Activated T-helper 1 cell treated with anti-CD3 and anti-CD28 coated beads, Interleukin-12 subunit alpha, Interleukin-12 subunit beta, Interleukin-2, Interleukin-4 antibody, amounts not matched to agents 30 ng/mL and 10 ng/mL and 1 ng/mL, durations not matched to agents 14 hours and 24 hours and 36 hours (primary cell): ENCODE measurements at regions of chr19 and their contacts with region 1.

Region 1: GRCh38 chr19:20999731-21000352 is 20.6 kb upstream of the ZNF430 start:
- DNase-seq: peak; percentile 80
- H3K4me3 Mint-ChIP-seq: peak overlapping the region; percentile 89
- H3K27ac Mint-ChIP-seq: peak overlapping the region; percentile 76
- H3K4me1 Mint-ChIP-seq: peaks cover 8% of the 10 kb centered on the region
- H3K27me3 Mint-ChIP-seq: no peaks in the 10 kb centered on the region

Region 2: GRCh38 chr19:20565321-20566018 is 434.4 kb before region 1 on chr19 and contains the start of gene ZNF737:
- intact Hi-C with region 1: loop called (anchors 1 kb)
- DNase-seq: peak; percentile 81
- H3K4me3 Mint-ChIP-seq: peak within 1 kb of the TSS; percentile 97
- H3K27ac Mint-ChIP-seq: peak within 1 kb of the TSS; percentile 94
- H3K4me1 Mint-ChIP-seq: peaks cover 13% of the 10 kb centered on the region
- H3K27me3 Mint-ChIP-seq: no peaks in the 10 kb centered on the region
- total RNA-seq, gene ZNF737: 4.6 and 5.5 TPM in 2 replicates

Region 3: GRCh38 chr19:20923077-20923871 is 76.6 kb before region 1 on chr19 and contains the start of gene ZNF85:
- intact Hi-C with region 1: loop called (anchors 1 kb)
- DNase-seq: peak; percentile 85
- H3K4me3 Mint-ChIP-seq: peak within 1 kb of the TSS; percentile 94
- H3K27ac Mint-ChIP-seq: peak within 1 kb of the TSS; percentile 92
- H3K4me1 Mint-ChIP-seq: no peaks in the 10 kb centered on the region
- H3K27me3 Mint-ChIP-seq: no peaks in the 10 kb centered on the region
- total RNA-seq, gene ZNF85: 10.0 and 11.1 TPM in 2 replicates

Region 4: GRCh38 chr19:21020298-21021227 is 20.7 kb after region 1 on chr19 and contains the start of gene ZNF430:
- intact Hi-C with region 1: loop called (anchors 1 kb)
- DNase-seq: peak; percentile 93
- H3K4me3 Mint-ChIP-seq: peak within 1 kb of the TSS; percentile 99
- H3K27ac Mint-ChIP-seq: peak within 1 kb of the TSS; percentile 98
- H3K4me1 Mint-ChIP-seq: peaks cover 26% of the 10 kb centered on the region
- H3K27me3 Mint-ChIP-seq: peaks cover 2% of the 10 kb centered on the region
- total RNA-seq, gene ZNF430: 20.3 and 21.5 TPM in 2 replicates

Region 5: DNA sequence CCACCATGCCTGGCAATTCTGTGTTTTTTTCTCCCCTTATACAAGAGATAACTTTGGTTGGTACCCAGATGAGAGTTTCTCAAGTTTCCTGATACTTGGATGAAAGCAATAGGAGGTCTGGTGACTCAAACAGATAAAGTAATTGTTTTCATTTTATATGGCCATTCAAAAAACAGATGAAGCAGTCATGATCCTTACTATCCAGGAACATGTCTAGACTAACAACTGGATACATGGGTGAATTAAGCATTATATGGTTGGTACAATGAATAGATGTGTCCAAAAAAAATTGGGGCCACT is 29.1 kb after region 1 on chr19:
- intact Hi-C with region 1: loop called (anchors 2 kb)
- DNase-seq: no peak
- H3K4me3 Mint-ChIP-seq: peak overlapping the region; percentile 11
- H3K27ac Mint-ChIP-seq: no peak overlapping the region
- H3K4me1 Mint-ChIP-seq: peaks cover 35% of the 10 kb centered on the region
- H3K27me3 Mint-ChIP-seq: no peaks in the 10 kb centered on the region

Region 6: GRCh38 chr19:21082011-21082975 is 82.5 kb after region 1 on chr19 and contains the start of gene ZNF714:
- intact Hi-C with region 1: no loop called
- DNase-seq: peak; percentile 86
- H3K4me3 Mint-ChIP-seq: peak within 1 kb of the TSS; percentile 99
- H3K27ac Mint-ChIP-seq: peak within 1 kb of the TSS; percentile 98
- H3K4me1 Mint-ChIP-seq: peaks cover 31% of the 10 kb centered on the region
- H3K27me3 Mint-ChIP-seq: no peaks in the 10 kb centered on the region
- total RNA-seq, gene ZNF714: 18.5 and 19.5 TPM in 2 replicates

Region 7: GRCh38 chr19:21141787-21142464 is 142.1 kb after region 1 on chr19 and contains the start of gene ZNF431:
- intact Hi-C with region 1: loop called (anchors 1 kb)
- DNase-seq: peak; percentile 85
- H3K4me3 Mint-ChIP-seq: peak within 1 kb of the TSS; percentile 96
- H3K27ac Mint-ChIP-seq: peak within 1 kb of the TSS; percentile 91
- H3K4me1 Mint-ChIP-seq: peaks cover 25% of the 10 kb centered on the region
- H3K27me3 Mint-ChIP-seq: no peaks in the 10 kb centered on the region
- total RNA-seq, gene ZNF431: 16.0 and 16.8 TPM in 2 replicates

Region 8: DNA sequence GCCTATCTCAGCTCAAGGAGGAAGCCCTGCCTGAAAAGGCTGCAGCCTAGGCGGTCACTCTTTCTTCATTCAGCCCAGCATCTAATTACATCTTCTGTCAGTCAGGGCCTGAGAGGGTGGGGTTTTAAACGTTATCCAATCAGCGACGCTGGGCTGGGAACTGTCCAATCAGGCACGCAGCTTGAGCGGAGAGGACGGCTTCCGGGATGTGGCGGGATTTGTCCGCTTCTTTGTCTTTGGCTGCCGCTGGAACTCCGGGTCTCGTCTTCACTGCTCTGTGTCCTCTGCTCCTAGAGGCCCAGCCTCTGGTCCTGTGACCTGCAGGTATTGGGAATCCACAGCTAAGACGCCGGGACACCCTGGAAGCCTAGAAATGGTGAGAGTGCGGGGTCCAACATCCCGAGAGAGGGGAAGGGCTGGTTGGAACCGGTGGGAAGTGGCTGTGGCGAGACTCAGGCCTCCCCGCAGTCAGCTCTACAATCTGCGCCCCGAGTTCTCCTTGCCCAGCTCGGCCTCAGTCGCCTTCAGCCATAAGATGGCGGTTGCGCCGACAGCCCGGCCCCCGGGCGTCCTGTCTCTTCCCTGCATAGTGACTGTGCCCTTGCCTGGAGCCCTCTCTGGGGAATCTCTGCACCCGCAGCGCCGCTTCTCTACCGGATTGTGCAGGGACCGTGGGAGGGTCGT is 359.1 kb after region 1 on chr19 and contains the start of gene ZNF738:
- intact Hi-C with region 1: loop called (anchors 1 kb)
- DNase-seq: peak; percentile 77
- H3K4me3 Mint-ChIP-seq: peak within 1 kb of the TSS; percentile 100
- H3K27ac Mint-ChIP-seq: peak within 1 kb of the TSS; percentile 97
- H3K4me1 Mint-ChIP-seq: no peaks in the 10 kb centered on the region
- H3K27me3 Mint-ChIP-seq: no peaks in the 10 kb centered on the region
- total RNA-seq, gene ZNF738: 9.7 and 11.7 TPM in 2 replicates

Region 9: DNA sequence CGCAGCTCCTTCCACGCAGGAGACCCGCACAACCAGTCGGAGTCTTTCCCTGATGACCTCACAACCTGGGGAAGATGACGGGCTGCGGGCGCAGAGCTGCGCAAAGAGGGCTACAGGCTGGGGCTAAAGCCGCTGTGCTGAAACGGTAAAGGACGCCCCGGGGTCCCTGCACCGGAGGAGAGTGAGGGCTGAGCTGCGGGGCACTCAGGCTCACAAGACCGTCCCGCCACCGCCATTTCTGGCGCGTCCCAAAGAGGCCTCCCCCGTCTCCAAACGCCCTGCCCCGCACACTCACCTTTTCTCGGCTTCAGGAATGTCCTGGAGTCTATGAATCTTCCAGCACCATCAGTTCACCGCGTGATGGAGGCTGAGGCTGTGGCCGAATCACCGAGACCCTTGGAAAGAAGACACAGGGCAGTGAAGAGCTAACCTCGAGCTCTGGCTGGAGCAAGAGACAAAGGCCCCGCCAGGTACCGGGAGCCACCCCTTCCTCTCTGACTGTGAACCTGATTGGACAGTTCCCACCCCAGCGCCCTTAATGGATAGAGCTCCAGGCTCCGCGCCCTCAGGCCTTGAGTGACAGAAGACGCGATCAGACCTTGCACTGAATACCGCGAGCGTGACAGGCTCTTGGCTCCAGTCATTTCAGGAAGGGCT is 463.7 kb after region 1 on chr19:
- intact Hi-C with region 1: no loop called
- DNase-seq: no peak
- H3K4me3 Mint-ChIP-seq: peak overlapping the region; percentile 81
- H3K27ac Mint-ChIP-seq: no peak overlapping the region
- H3K4me1 Mint-ChIP-seq: no peaks in the 10 kb centered on the region
- H3K27me3 Mint-ChIP-seq: no peaks in the 10 kb centered on the region